Breast epithelium (tissue), 4 donors: ENCODE measurements at regions of chrX and their contacts with region 1.

Region 1: DNA sequence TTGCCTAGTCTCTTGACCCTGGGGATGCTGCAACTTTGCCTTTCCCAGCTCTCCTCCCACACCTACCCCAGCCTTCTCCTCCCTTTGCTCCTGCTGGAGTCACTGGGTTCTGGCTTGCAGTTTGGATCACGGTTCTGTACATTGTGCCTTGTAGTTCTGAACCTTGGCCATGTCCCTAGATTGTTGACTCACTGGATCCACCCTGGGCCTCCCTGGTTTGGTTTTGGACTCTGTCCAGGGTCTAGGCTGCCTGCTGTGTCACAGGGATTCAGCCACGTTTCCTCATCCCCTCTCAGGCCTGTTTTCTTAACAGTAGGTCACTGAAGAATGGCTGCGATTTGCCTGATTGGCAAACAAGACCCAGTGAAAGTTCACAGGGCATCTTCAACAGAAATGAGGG is 11.5 kb upstream of the GABRE start:
- DNase-seq: no peak
- H3K4me3 ChIP-seq: no peak overlapping the region
- H3K27ac ChIP-seq: no peak overlapping the region
- H3K4me1 ChIP-seq: no peaks in the 10 kb centered on the region
- H3K27me3 ChIP-seq: peaks cover 0 to 15% of the 10 kb centered on the region in 2 donors
- CTCF ChIP-seq: no peak
- POLR2A ChIP-seq: no peak

Region 2: GRCh38 chrX:151958101-151958500 is 27.9 kb before region 1 on chrX:
- intact Hi-C with region 1: loop called (anchors 1 kb)
- DNase-seq: no peak
- H3K4me3 ChIP-seq: no peak overlapping the region
- H3K27ac ChIP-seq: no peak overlapping the region
- H3K4me1 ChIP-seq: no peaks in the 10 kb centered on the region
- H3K27me3 ChIP-seq: peaks cover 0 to 7% of the 10 kb centered on the region in 2 donors
- CTCF ChIP-seq: no peak
- POLR2A ChIP-seq: no peak